ENCODE measurements at regions of chr9 and their contacts with region 1.

Region 1: GRCh38 chr9:100011062-100011681 is 87.6 kb downstream of the ERP44 start:
- DNase-seq: peak in 7 of 9 experiments; percentile 6 to 77 (median 41)
- ATAC-seq: peak; percentile 54
- H3K4me3 ChIP-seq: no peak overlapping the region
- H3K4me3 Mint-ChIP-seq: no peak overlapping the region
- H3K27ac ChIP-seq: no peak overlapping the region
- H3K27ac Mint-ChIP-seq: no peak overlapping the region
- H3K4me1 ChIP-seq: no peaks in the 10 kb centered on the region
- H3K4me1 Mint-ChIP-seq: no peaks in the 10 kb centered on the region
- H3K27me3 ChIP-seq: no peaks in the 10 kb centered on the region
- H3K27me3 Mint-ChIP-seq: no peaks in the 10 kb centered on the region
- CTCF ChIP-seq: peak; percentile 82

Region 2: DNA sequence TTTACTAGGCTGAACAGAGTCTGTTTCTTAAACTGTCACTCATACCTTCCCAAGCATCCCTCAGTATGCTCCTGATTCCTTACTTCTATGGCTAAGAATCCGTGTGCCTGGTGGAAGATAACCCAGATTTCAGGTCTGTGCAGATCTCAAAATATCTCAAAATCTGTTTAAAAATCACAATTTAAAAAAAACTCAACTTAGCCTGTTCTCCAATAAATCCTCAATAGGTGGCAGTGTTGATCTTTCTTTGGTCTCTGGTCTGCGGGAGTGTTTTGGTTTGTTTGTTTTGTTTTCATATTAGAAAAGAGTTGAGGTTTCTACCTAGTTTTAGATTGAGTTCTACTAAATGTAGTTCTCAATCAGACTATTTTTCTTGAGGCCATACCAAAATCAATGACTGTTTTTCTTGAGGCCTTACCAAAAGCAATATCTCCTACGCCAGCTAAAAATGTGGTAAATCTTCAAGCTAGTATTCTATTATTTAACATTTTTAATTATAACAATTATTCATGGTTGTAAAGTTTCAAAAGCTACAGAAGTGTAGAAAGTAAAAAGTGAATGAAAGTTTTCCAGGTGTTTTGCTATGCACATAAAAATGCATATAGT is 848.3 kb before region 1 on chr9:
- CTCF ChIA-PET with region 1: no interaction called
- POLR2A ChIA-PET with region 1: no interaction called
- intact Hi-C with region 1: loop called (anchors 2 to 5 kb)
- DNase-seq: peak in 2 of 9 experiments; percentile 56 to 71
- ATAC-seq: no peak
- H3K4me3 ChIP-seq: no peak overlapping the region
- H3K4me3 Mint-ChIP-seq: no peak overlapping the region
- H3K27ac ChIP-seq: no peak overlapping the region
- H3K27ac Mint-ChIP-seq: no peak overlapping the region
- H3K4me1 ChIP-seq: peaks cover 14% of the 10 kb centered on the region
- H3K4me1 Mint-ChIP-seq: peaks cover 26% of the 10 kb centered on the region
- H3K27me3 ChIP-seq: no peaks in the 10 kb centered on the region
- H3K27me3 Mint-ChIP-seq: no peaks in the 10 kb centered on the region
- CTCF ChIP-seq: peak; percentile 86

Region 3: GRCh38 chr9:99266255-99267023 is 744.7 kb before region 1 on chr9:
- CTCF ChIA-PET with region 1: no interaction called
- POLR2A ChIA-PET with region 1: no interaction called
- intact Hi-C with region 1: loop called (anchors 2 kb)
- DNase-seq: peak; percentile 12 to 73 (median 59)
- ATAC-seq: peak; percentile 58
- H3K4me3 ChIP-seq: peak overlapping the region in 1 of 2 experiments; percentile 18
- H3K4me3 Mint-ChIP-seq: peak overlapping the region; percentile 9
- H3K27ac ChIP-seq: no peak overlapping the region
- H3K27ac Mint-ChIP-seq: no peak overlapping the region
- H3K4me1 ChIP-seq: peaks cover 7% of the 10 kb centered on the region
- H3K4me1 Mint-ChIP-seq: peaks cover 9% of the 10 kb centered on the region
- H3K27me3 ChIP-seq: no peaks in the 10 kb centered on the region
- H3K27me3 Mint-ChIP-seq: peaks cover 2% of the 10 kb centered on the region
- CTCF ChIP-seq: peak; percentile 87

Region 4: DNA sequence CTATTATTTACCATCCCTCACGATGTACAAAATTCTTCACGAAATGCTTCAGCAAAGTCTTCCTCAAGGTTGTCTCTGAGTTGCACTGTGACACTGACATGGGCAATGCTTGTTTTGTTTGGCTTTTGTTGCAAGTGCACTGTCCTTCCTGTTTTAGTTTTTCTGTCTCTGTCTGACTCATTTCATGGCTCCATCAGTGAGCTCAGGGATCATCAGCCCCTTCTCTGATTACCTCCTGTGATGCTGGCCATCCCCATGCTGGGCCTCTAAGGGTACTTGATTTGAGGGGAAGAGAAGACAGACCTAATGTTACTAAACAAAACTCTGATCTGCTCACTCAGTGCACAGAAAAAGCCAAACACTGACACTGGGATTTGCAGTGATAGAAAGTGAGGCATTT is 142.3 kb before region 1 on chr9:
- CTCF ChIA-PET with region 1: no interaction called
- POLR2A ChIA-PET with region 1: no interaction called
- intact Hi-C with region 1: no loop called
- DNase-seq: no peak
- ATAC-seq: no peak
- H3K4me3 ChIP-seq: no peak overlapping the region
- H3K4me3 Mint-ChIP-seq: no peak overlapping the region
- H3K27ac ChIP-seq: no peak overlapping the region
- H3K27ac Mint-ChIP-seq: no peak overlapping the region
- H3K4me1 ChIP-seq: no peaks in the 10 kb centered on the region
- H3K4me1 Mint-ChIP-seq: no peaks in the 10 kb centered on the region
- H3K27me3 ChIP-seq: no peaks in the 10 kb centered on the region
- H3K27me3 Mint-ChIP-seq: no peaks in the 10 kb centered on the region
- CTCF ChIP-seq: no peak

Region 5: DNA sequence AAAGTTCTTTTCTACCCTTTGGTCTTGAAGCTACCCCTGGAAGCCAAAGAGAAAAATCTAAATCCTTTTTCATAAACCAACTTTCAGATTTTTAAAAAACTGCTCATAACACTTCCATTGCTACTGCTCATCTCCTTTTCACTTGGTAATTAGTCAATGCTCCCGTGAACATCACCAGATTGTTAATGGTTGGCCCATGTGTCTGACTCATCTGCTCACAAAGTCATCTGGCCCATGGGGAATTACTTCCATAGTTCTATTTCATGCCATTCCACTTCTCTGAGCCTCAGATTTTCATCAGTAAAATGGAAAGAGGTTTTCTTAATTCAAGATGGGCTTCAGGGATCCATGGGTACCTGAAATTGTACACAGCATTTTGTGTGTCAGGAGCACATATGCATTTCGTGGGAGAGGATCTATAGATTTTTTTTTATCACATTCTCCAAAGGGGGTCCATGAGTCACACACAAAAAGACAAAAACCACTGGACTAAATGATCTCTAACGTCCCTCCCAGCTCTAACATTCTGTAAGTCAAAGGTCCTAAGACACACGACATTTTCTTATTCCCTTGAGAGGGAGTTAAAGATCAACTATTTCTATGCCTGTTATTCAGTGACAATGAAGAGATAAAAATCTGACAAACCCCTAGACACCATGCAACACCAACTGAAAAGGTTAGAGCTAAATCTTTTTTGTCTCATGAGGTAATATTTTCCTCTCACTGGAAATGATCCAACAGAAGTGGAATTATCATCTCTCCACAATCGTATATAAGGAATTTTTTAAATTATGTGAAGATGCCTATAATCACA is 266.2 kb after region 1 on chr9:
- CTCF ChIA-PET with region 1: no interaction called
- POLR2A ChIA-PET with region 1: no interaction called
- intact Hi-C with region 1: no loop called
- DNase-seq: no peak
- ATAC-seq: no peak
- H3K4me3 ChIP-seq: no peak overlapping the region
- H3K4me3 Mint-ChIP-seq: no peak overlapping the region
- H3K27ac ChIP-seq: no peak overlapping the region
- H3K27ac Mint-ChIP-seq: no peak overlapping the region
- H3K4me1 ChIP-seq: no peaks in the 10 kb centered on the region
- H3K4me1 Mint-ChIP-seq: no peaks in the 10 kb centered on the region
- H3K27me3 ChIP-seq: no peaks in the 10 kb centered on the region
- H3K27me3 Mint-ChIP-seq: no peaks in the 10 kb centered on the region
- CTCF ChIP-seq: no peak

Measured in CD8-positive, alpha-beta T cell (primary cell).